A673 (cell line): ENCODE measurements at regions of chr5 and their contacts with region 1.

Region 1: GRCh38 chr5:28896949-28897348 is 1858.6 kb upstream of the CDH9 start:
- DNase-seq: peak; percentile 18
- H3K4me3 ChIP-seq: no peak overlapping the region
- H3K27ac ChIP-seq: no peak overlapping the region
- H3K4me1 ChIP-seq: no peaks in the 10 kb centered on the region
- H3K27me3 ChIP-seq: no peaks in the 10 kb centered on the region
- CTCF ChIP-seq: peak; percentile 43; the same call in 1 of the 2 replicates

Region 2: GRCh38 chr5:27020973-27021372 is 1876.0 kb before region 1 on chr5:
- CTCF ChIA-PET with region 1: no interaction called
- POLR2A ChIA-PET with region 1: no interaction called
- intact Hi-C with region 1: loop called (anchors 10 kb)
- DNase-seq: peak; percentile 31
- H3K4me3 ChIP-seq: no peak overlapping the region
- H3K27ac ChIP-seq: no peak overlapping the region
- H3K4me1 ChIP-seq: no peaks in the 10 kb centered on the region
- H3K27me3 ChIP-seq: no peaks in the 10 kb centered on the region
- CTCF ChIP-seq: peak; percentile 41

Region 3: DNA sequence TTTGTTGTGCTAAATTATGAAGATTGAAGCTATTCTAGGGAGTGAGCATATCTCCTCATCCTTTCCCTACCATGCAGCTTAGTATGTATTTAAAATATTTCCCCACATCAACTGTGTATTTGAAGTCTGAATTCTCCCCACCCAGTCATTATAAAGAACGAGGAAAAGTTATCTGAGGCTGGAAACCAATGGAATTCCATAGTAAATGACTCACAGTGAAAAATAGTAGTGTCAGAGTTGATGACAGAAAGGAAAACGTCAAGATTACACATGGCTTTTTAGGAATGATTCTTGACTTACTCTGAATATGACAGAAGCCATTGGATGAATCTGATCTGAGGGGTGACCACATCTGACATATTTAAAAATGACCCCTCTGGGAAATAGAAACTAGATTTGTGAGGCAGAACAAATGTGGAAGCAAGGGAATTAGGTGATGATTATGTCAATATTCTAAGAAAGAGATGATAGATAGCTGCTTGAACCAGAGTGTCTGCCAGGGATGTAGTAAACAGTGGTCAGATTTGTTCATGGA is 89.7 kb before region 1 on chr5:
- CTCF ChIA-PET with region 1: no interaction called
- POLR2A ChIA-PET with region 1: no interaction called
- intact Hi-C with region 1: no loop called
- DNase-seq: no peak
- H3K4me3 ChIP-seq: no peak overlapping the region
- H3K27ac ChIP-seq: no peak overlapping the region
- H3K4me1 ChIP-seq: no peaks in the 10 kb centered on the region
- H3K27me3 ChIP-seq: no peaks in the 10 kb centered on the region
- CTCF ChIP-seq: no peak

Region 4: GRCh38 chr5:28967848-28968247 is 70.9 kb after region 1 on chr5:
- CTCF ChIA-PET with region 1: no interaction called
- POLR2A ChIA-PET with region 1: no interaction called
- intact Hi-C with region 1: no loop called
- DNase-seq: no peak
- H3K4me3 ChIP-seq: no peak overlapping the region
- H3K27ac ChIP-seq: no peak overlapping the region
- H3K4me1 ChIP-seq: no peaks in the 10 kb centered on the region
- H3K27me3 ChIP-seq: no peaks in the 10 kb centered on the region
- CTCF ChIP-seq: no peak

Region 5: DNA sequence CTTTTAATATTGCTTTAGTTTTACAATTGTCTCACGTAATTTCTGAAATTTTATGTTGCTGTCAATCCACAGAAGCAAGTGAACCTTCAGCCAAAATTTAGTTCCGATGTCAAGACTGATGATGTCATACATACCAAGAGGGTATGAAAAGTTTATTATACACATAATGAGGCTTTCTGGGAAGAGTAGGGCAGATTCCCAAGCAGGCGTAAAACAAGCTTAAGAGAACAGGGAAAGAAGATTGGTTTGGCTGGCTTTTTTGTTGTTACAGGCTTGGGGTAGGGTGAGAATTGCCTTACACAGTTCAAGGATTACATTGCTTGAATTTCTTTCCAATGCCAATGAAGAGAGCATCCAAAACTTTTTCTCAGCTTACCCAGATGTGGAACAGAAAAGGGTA is 333.6 kb after region 1 on chr5:
- CTCF ChIA-PET with region 1: no interaction called
- POLR2A ChIA-PET with region 1: no interaction called
- intact Hi-C with region 1: no loop called
- DNase-seq: peak; percentile 0
- H3K4me3 ChIP-seq: no peak overlapping the region
- H3K27ac ChIP-seq: no peak overlapping the region
- H3K4me1 ChIP-seq: no peaks in the 10 kb centered on the region
- H3K27me3 ChIP-seq: no peaks in the 10 kb centered on the region
- CTCF ChIP-seq: no peak